K562 (cell line): ENCODE measurements at regions of chr1 and their contacts with region 1.

Region 1: GRCh38 chr1:224411766-224412165 is 22.8 kb downstream of the WDR26 start:
- DNase-seq: no peak
- ATAC-seq: peak; percentile 25; the same call in 2 of the 3 replicates
- H3K4me3 ChIP-seq: no peak overlapping the region
- H3K27ac ChIP-seq: no peak overlapping the region
- H3K4me1 ChIP-seq: no peaks in the 10 kb centered on the region
- H3K27me3 ChIP-seq: no peaks in the 10 kb centered on the region
- CTCF ChIP-seq: no peak
- EP300 ChIP-seq: no peak
- POLR2A ChIP-seq: no peak
- RAD21 ChIP-seq: no peak

Region 2: DNA sequence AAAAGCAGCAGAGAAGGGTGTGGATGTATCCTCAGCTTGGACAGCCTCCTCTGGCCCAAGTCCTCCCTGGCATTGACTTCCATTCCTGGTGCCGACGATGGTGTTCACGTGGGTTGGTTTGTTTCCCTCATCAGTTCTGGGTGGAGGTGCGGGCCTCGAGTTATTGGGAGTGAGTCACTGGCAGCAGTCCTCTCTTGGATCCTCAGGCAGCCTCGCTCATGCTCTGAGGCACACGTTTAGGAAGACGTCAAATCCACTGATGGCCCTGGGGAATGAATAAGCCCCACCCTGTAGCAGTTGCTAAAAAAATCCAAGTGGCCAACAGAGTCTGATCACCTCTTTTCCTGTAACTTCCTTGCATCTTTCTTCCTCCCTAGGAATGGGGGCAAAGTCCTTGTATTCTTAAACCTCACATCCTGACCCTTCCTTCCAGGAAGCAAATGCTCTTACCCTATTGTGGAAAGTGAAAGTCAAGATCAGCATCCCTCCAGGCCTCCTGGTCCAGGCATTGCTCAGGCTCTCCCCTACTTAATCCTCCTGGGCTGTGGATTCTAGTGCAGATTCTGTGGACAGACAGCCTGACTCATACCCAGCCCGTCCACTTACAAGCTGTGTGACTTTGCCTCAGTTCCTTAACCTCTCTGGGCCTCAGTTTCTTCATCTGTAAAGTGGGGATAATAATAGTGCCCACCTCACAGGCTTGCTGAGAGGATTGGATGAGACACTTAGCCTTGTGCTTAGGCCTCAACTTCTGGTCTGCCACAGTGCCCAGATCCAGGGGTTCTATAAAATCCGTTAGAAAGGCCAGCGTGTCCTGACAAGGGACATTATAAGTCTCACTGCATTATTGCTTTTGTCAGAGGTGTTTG is 1379.8 kb before region 1 on chr1:
- CTCF ChIA-PET with region 1: no interaction called
- POLR2A ChIA-PET with region 1: no interaction called
- in situ Hi-C with region 1: no loop called
- intact Hi-C with region 1: no loop called
- DNase-seq: no peak
- ATAC-seq: no peak
- H3K4me3 ChIP-seq: no peak overlapping the region
- H3K27ac ChIP-seq: no peak overlapping the region
- H3K4me1 ChIP-seq: peaks cover 4 to 12% of the 10 kb centered on the region in 2 experiments; a peak in 3 of 5 replicates
- H3K27me3 ChIP-seq: peaks cover 21 to 48% of the 10 kb centered on the region in 2 experiments
- CTCF ChIP-seq: no peak
- EP300 ChIP-seq: no peak
- POLR2A ChIP-seq: no peak
- RAD21 ChIP-seq: no peak

Region 3: GRCh38 chr1:223860051-223860622 is 551.6 kb before region 1 on chr1:
- CTCF ChIA-PET with region 1: no interaction called
- POLR2A ChIA-PET with region 1: no interaction called
- in situ Hi-C with region 1: no loop called
- intact Hi-C with region 1: no loop called
- DNase-seq: no peak
- ATAC-seq: peak; percentile 45
- H3K4me3 ChIP-seq: no peak overlapping the region
- H3K27ac ChIP-seq: no peak overlapping the region
- H3K4me1 ChIP-seq: no peaks in the 10 kb centered on the region; a peak in 1 of 5 replicates
- H3K27me3 ChIP-seq: no peaks in the 10 kb centered on the region
- CTCF ChIP-seq: no peak
- EP300 ChIP-seq: no peak
- POLR2A ChIP-seq: no peak
- RAD21 ChIP-seq: no peak

Region 4: DNA sequence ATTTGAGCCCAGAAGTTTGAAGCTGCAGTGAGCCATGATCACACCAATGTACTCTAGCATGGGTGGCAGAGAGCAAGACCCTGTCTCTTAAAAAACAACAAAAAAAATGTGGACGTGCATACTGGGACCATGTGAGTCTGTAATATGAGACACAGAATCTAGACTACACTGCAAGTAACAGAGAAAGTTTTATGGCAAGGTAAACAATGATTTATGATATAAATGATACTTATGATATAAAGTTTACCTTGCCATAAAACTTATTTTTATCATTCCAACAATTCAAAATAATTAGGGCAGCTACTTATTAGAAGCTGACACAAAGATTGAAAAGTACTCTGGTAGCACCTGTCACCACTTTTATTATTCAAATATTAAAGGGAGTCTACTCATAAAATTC is 11.9 kb before region 1 on chr1:
- CTCF ChIA-PET with region 1: no interaction called
- POLR2A ChIA-PET with region 1: interaction called, 18 read pairs
- in situ Hi-C with region 1: no loop called
- intact Hi-C with region 1: no loop called
- DNase-seq: no peak
- ATAC-seq: no peak
- H3K4me3 ChIP-seq: no peak overlapping the region
- H3K27ac ChIP-seq: no peak overlapping the region
- H3K4me1 ChIP-seq: no peaks in the 10 kb centered on the region
- H3K27me3 ChIP-seq: no peaks in the 10 kb centered on the region
- CTCF ChIP-seq: no peak
- EP300 ChIP-seq: no peak
- POLR2A ChIP-seq: no peak
- RAD21 ChIP-seq: no peak

Region 5: GRCh38 chr1:224668984-224669383 is 257.2 kb after region 1 on chr1:
- CTCF ChIA-PET with region 1: no interaction called
- POLR2A ChIA-PET with region 1: no interaction called
- in situ Hi-C with region 1: no loop called
- intact Hi-C with region 1: no loop called
- DNase-seq: no peak
- ATAC-seq: no peak
- H3K4me3 ChIP-seq: no peak overlapping the region
- H3K27ac ChIP-seq: no peak overlapping the region
- H3K4me1 ChIP-seq: no peaks in the 10 kb centered on the region
- H3K27me3 ChIP-seq: peaks cover 3 to 22% of the 10 kb centered on the region in 2 experiments; a peak in 2 of 5 replicates
- CTCF ChIP-seq: no peak
- EP300 ChIP-seq: no peak
- POLR2A ChIP-seq: no peak
- RAD21 ChIP-seq: no peak